ENCODE measurements at regions of chr1 and their contacts with region 1.

Region 1: DNA sequence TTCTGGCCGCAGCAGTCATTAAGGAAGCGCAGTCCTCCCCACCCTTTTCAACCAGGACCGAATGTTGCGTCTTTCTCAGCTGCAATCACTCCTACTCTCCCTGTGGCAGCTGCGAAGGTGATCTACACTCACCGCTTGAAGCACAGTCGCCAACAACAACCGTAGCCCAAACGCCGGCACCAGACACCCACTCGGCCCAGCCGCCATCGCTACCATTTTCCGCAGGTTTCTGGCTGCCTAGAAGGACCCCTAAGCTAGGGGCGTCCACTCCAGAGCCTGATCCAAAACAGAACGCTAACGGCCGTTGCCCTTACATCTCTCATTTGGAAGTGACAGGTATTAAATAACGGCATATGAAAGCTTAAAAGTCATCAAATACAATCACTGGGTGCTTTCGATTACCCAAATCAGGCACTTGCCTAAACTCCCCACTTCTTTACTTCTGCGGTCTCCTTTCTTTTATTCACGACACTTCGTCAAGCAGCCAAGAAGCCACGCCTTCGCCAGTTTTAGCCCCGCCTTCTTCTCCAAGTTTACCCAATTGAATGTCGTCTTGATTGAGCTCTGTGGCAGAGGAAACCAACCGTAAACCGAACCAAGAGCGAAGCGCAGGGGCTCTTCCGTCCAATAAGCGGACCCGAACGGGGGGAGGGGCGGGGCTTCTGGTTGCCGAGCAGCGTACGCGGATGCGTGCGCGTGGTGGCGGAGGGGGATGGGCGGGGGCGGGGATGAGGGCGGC is at the start of gene SELENOF:
- DNase-seq: peak; percentile 99
- H3K4me3 Mint-ChIP-seq: no peak within 1 kb of the TSS
- H3K27ac Mint-ChIP-seq: no peak within 1 kb of the TSS
- H3K4me1 Mint-ChIP-seq: peaks cover 40% of the 10 kb centered on the region
- H3K27me3 Mint-ChIP-seq: no peaks in the 10 kb centered on the region
- total RNA-seq, gene SELENOF: 127 to 139 TPM

Region 2: GRCh38 chr1:86395771-86396497 is 518.1 kb before region 1 on chr1 and contains the start of gene ODF2L:
- CTCF ChIA-PET with region 1: no interaction called
- POLR2A ChIA-PET with region 1: interaction called, 5 read pairs
- intact Hi-C with region 1: loop called (anchors 1 kb)
- DNase-seq: peak; percentile 94
- H3K4me3 Mint-ChIP-seq: peak within 1 kb of the TSS; percentile 97
- H3K27ac Mint-ChIP-seq: peak within 1 kb of the TSS; percentile 92
- H3K4me1 Mint-ChIP-seq: peaks cover 48% of the 10 kb centered on the region
- H3K27me3 Mint-ChIP-seq: no peaks in the 10 kb centered on the region
- total RNA-seq, gene ODF2L: 31.5 to 32.3 TPM

Region 3: GRCh38 chr1:86866665-86867064 is 47.4 kb before region 1 on chr1:
- CTCF ChIA-PET with region 1: no interaction called
- POLR2A ChIA-PET with region 1: no interaction called
- intact Hi-C with region 1: loop called (anchors 5 kb)
- DNase-seq: no peak
- H3K4me3 Mint-ChIP-seq: no peak overlapping the region
- H3K27ac Mint-ChIP-seq: no peak overlapping the region
- H3K4me1 Mint-ChIP-seq: peaks cover 18% of the 10 kb centered on the region
- H3K27me3 Mint-ChIP-seq: no peaks in the 10 kb centered on the region

Region 4: GRCh38 chr1:87058343-87058649 is 144.2 kb after region 1 on chr1:
- CTCF ChIA-PET with region 1: no interaction called
- POLR2A ChIA-PET with region 1: no interaction called
- intact Hi-C with region 1: loop called (anchors 5 kb)
- DNase-seq: no peak
- H3K4me3 Mint-ChIP-seq: no peak overlapping the region
- H3K27ac Mint-ChIP-seq: no peak overlapping the region
- H3K4me1 Mint-ChIP-seq: peaks cover 28% of the 10 kb centered on the region
- H3K27me3 Mint-ChIP-seq: no peaks in the 10 kb centered on the region

Region 5: GRCh38 chr1:87328272-87329050 is 414.4 kb after region 1 on chr1 and contains the start of gene LMO4:
- CTCF ChIA-PET with region 1: no interaction called
- POLR2A ChIA-PET with region 1: no interaction called
- intact Hi-C with region 1: loop called (anchors 1 kb)
- DNase-seq: peak; percentile 93
- H3K4me3 Mint-ChIP-seq: peak within 1 kb of the TSS; percentile 89
- H3K27ac Mint-ChIP-seq: peak within 1 kb of the TSS; percentile 85
- H3K4me1 Mint-ChIP-seq: peaks cover 33% of the 10 kb centered on the region
- H3K27me3 Mint-ChIP-seq: peaks cover 8% of the 10 kb centered on the region
- total RNA-seq, gene LMO4: 23.0 to 24.1 TPM